Stomach (tissue), 19 donors: ENCODE measurements at regions of chr20 and their contacts with region 1.

Region 1: GRCh38 chr20:45771182-45771759 is 20.4 kb downstream of the WFDC3 start:
- DNase-seq: peak; percentile 89 to 95
- H3K4me3 ChIP-seq: no peak overlapping the region
- H3K27ac ChIP-seq: peak overlapping the region in 3 of 5 donors; percentile 21 to 69 (median 64)
- H3K4me1 ChIP-seq: peaks cover 10 to 17% (median 11%) of the 10 kb centered on the region in 4 donors
- H3K27me3 ChIP-seq: no peaks in the 10 kb centered on the region
- CTCF ChIP-seq: peak in 6 of 7 experiments; percentile 55 to 98 (median 96)
- EP300 ChIP-seq: peak; percentile 9
- POLR2A ChIP-seq: no peak

Region 2: DNA sequence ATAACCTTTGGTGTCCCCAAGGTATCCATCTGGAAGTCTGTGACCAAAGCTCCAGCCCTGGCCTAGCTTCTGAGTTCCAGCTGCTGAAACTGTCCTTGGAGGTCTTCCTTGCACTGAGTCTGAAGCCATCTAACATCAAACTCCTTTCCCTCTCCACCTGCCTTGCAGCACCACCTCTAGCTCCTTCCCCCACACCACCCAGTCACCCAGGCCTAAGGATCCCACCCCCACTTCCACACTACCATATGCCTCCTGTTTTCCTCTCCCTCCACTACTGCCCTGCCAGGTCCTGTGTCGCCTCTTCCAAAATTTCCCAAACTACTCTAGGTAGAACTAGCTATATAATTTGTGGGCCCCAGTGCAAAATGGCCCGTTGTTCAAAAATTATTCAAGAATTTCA is 452.3 kb before region 1 on chr20:
- intact Hi-C with region 1: loop called (anchors 5 kb)
- DNase-seq: no peak
- H3K4me3 ChIP-seq: no peak overlapping the region
- H3K27ac ChIP-seq: no peak overlapping the region
- H3K4me1 ChIP-seq: peaks cover 3 to 41% (median 12%) of the 10 kb centered on the region in 4 donors
- H3K27me3 ChIP-seq: peaks cover 0 to 43% (median 19%) of the 10 kb centered on the region in 3 donors
- CTCF ChIP-seq: no peak
- EP300 ChIP-seq: no peak
- POLR2A ChIP-seq: no peak

Region 3: GRCh38 chr20:45647441-45648050 is 123.7 kb before region 1 on chr20:
- intact Hi-C with region 1: no loop called
- DNase-seq: no peak
- H3K4me3 ChIP-seq: no peak overlapping the region
- H3K27ac ChIP-seq: no peak overlapping the region
- H3K4me1 ChIP-seq: no peaks in the 10 kb centered on the region
- H3K27me3 ChIP-seq: no peaks in the 10 kb centered on the region
- CTCF ChIP-seq: no peak
- EP300 ChIP-seq: no peak
- POLR2A ChIP-seq: no peak